ENCODE measurements at regions of chr19 and their contacts with region 1.

Region 1: GRCh38 chr19:1605236-1606137 is at the start of gene UQCR11:
- DNase-seq: peak; percentile 83 to 97
- H3K4me3 ChIP-seq: peak within 1 kb of the TSS; percentile 93 to 98
- H3K27ac ChIP-seq: peak within 1 kb of the TSS; percentile 92
- H3K4me1 ChIP-seq: peaks cover 15 to 25% of the 10 kb centered on the region in 2 donors
- H3K27me3 ChIP-seq: no peaks in the 10 kb centered on the region
- CTCF ChIP-seq: peak; percentile 59 to 71 (median 65)
- total RNA-seq, gene UQCR11: 61.0 TPM

Region 2: DNA sequence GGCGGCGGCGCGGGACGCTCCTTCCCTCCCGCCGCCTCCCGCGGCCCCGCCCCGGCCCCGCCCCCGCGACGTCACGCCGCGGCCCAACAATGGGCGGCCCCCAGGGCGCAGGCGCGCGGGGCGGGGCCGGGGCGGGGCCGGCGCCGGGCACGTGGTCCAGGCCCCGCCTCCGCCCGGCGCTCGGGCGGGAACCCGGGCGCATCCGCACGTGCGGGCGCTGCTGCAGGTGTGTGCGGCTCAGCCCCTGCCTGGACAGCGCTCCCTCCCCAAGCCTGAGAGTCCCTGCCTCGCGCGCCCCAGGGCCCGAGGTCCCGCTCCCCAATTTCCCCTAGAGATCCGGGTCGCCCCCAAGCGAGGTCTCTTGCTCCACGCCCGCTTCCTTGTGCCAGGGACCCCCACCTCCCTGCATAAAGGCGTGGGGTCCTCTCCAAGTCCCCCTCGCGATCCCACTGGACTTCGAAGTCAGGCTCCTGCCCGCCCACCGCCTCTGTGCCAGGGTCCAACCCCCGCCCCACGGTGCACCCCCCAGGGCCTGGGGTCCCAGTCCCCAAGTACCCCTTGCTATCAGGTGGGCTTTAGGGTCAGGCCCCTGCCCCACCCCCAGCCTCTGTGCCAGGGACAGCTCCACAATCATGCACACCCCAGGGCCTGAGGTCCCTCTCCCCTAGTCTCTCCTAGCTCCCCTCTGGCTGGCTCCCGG is 37.0 kb before region 1 on chr19 and contains the start of gene MEX3D:
- intact Hi-C with region 1: loop called (anchors 5 kb)
- DNase-seq: peak in 1 of 2 donors; percentile 85
- H3K4me3 ChIP-seq: peak within 1 kb of the TSS; percentile 57 to 94
- H3K27ac ChIP-seq: peak within 1 kb of the TSS; percentile 72 to 84
- H3K4me1 ChIP-seq: peaks cover 4 to 9% of the 10 kb centered on the region in 2 donors
- H3K27me3 ChIP-seq: no peaks in the 10 kb centered on the region
- CTCF ChIP-seq: no peak
- total RNA-seq, gene MEX3D: 83.7 TPM

Region 3: GRCh38 chr19:1582236-1582635 is 23.3 kb before region 1 on chr19:
- intact Hi-C with region 1: no loop called
- DNase-seq: no peak
- H3K4me3 ChIP-seq: no peak overlapping the region
- H3K27ac ChIP-seq: no peak overlapping the region
- H3K4me1 ChIP-seq: no peaks in the 10 kb centered on the region
- H3K27me3 ChIP-seq: no peaks in the 10 kb centered on the region
- CTCF ChIP-seq: no peak

Region 4: DNA sequence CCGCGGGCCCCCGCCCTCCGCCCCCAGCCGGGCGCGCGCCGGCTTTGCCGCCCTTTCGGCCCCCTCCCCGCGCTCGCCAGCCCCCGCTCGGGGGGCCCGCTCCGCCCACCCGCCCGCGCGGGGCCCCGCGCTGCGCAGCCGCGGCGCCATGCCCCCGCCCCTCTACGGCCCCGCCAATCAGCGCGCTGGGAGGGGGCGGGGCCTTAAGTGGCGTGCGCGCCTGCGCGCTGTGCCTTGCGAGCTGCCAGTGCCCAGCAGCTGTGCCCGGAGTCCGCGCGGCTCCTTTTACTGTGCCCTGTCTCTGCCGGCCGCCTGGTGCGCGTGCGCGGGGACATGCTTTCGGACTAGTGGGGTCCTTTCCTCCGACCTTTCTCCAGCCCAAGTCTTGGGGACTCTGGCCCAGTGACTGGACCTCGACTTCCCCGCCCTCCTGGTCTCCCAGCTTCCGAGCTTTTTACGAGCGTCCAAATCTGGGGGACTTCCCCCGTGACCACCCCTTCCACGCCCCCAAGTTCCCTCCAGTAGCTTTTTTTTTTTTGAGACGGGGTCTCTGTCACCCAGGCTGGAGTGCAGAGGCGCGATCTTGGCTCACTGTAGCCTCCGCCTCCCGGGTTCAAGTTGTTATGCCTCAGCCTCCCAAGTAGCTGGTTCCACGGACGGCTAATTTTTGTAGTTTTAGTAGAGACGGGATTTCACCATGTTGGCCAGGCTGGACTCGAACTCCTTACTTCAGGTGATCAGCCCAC is 12.6 kb before region 1 on chr19 and contains the start of gene MBD3:
- intact Hi-C with region 1: loop called (anchors 1 kb)
- DNase-seq: peak; percentile 62 to 96
- H3K4me3 ChIP-seq: peak within 1 kb of the TSS; percentile 74 to 89
- H3K27ac ChIP-seq: peak within 1 kb of the TSS; percentile 84 to 94
- H3K4me1 ChIP-seq: peaks cover 8 to 17% of the 10 kb centered on the region in 2 donors
- H3K27me3 ChIP-seq: no peaks in the 10 kb centered on the region
- CTCF ChIP-seq: peak in 1 of 3 experiments; percentile 27
- total RNA-seq, gene MBD3: 143 TPM

Measured in ascending aorta (tissue), 2 donors.